Activated CD4-positive, alpha-beta T cell treated with anti-CD3 and anti-CD28 coated beads, Interleukin-2, amount 10 ng/mL, durations not matched to agents 24 days and 14 days (primary cell): ENCODE measurements at regions of chr19 and their contacts with region 1.

Region 1: GRCh38 chr19:31350701-31351068 is 1.4 kb upstream of the TSHZ3 start:
- DNase-seq: peak; percentile 81
- H3K4me3 Mint-ChIP-seq: peak overlapping the region; percentile 89
- H3K27ac Mint-ChIP-seq: no peak overlapping the region
- H3K4me1 Mint-ChIP-seq: peaks cover 31% of the 10 kb centered on the region
- H3K27me3 Mint-ChIP-seq: peaks cover 69% of the 10 kb centered on the region

Region 2: DNA sequence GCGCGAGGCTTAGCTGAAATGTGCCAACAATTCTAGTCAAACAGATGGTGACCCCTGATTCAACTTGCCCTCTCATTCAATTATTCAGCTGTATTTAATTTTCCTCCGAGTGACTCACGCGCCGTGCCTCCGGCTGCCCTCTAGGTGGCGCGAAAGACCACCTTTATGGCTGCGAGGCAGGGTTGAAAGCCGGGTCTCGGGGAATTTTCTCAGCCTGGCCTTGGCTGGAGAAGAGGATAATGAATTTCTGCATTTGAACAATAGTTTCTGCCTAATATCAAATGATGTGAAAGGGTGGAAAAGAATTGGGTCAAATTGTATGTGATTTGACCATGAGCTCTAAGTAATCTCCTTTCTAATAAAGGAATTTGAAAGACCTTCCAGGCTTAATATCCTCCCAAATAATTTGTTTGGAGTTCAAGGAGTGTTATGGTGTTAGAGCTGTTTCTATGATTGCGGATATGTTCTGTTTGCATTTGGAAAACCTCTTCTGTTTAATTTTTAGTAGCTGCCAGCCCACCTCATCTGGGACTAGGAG is 667.6 kb before region 1 on chr19:
- intact Hi-C with region 1: loop called (anchors 5 kb)
- DNase-seq: peak; percentile 85
- H3K4me3 Mint-ChIP-seq: no peak overlapping the region
- H3K27ac Mint-ChIP-seq: no peak overlapping the region
- H3K4me1 Mint-ChIP-seq: no peaks in the 10 kb centered on the region
- H3K27me3 Mint-ChIP-seq: peaks cover 13% of the 10 kb centered on the region